ENCODE measurements at regions of chr3 and their contacts with region 1.

Region 1: GRCh38 chr3:139319428-139320402 is 24.1 kb upstream of the MRPS22 start:
- DNase-seq: no peak
- H3K4me3 ChIP-seq: no peak overlapping the region
- H3K27ac ChIP-seq: no peak overlapping the region
- H3K27me3 ChIP-seq: no peaks in the 10 kb centered on the region
- CTCF ChIP-seq: peak; percentile 74

Region 2: GRCh38 chr3:138381950-138382688 is 937.6 kb before region 1 on chr3:
- in situ Hi-C with region 1: no loop called
- DNase-seq: peak; percentile 12
- H3K4me3 ChIP-seq: no peak overlapping the region
- H3K27ac ChIP-seq: no peak overlapping the region
- H3K27me3 ChIP-seq: no peaks in the 10 kb centered on the region
- CTCF ChIP-seq: no peak

Region 3: DNA sequence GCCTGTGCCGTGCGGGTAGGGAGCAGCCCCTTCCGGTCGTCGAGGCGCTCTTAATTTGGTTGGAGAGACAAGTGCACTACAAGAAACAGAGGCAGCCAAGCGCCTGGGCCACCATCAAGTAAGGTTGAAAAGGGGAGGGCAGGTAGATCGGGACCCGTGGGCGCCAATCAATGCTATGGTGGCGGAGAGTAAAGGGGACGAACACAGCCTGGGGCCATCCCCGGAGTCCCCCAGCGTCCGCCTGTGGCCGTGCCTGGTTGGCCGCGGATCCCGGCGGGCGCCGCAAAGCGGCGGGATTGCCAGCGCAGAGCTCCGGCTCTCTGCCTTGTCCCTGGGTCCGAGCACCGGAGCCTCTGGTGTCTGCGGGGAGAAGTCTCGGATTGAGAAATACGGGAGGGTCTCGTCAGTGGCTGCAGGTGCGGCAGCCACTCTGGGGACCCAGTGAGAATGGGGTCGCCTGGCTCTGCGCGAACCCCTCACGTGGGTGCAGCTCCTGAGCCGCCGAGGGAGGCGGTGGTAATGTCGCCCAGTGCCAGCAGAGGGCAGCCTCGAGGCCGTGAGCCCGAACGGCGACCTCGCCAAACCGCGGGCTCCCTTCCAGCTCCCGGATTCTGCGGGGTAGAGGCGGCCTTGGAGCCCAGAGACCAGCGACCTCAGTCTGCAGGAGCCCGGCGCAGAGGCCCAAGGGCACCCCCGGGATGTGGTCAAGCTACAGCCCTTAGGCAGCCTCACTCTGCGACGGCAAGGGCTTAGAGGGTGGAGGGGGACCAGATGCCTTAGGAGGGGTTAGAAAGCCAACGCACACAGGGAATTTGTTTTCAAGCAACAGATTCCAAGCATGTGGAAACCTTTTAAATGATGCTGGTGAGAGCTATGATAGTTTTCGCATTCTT is 383.6 kb before region 1 on chr3:
- in situ Hi-C with region 1: loop called (anchors 25 kb)
- DNase-seq: peak; percentile 52
- H3K4me3 ChIP-seq: peak overlapping the region; percentile 46
- H3K27ac ChIP-seq: no peak overlapping the region
- H3K27me3 ChIP-seq: peaks cover 47% of the 10 kb centered on the region
- CTCF ChIP-seq: peak; percentile 92

Region 4: DNA sequence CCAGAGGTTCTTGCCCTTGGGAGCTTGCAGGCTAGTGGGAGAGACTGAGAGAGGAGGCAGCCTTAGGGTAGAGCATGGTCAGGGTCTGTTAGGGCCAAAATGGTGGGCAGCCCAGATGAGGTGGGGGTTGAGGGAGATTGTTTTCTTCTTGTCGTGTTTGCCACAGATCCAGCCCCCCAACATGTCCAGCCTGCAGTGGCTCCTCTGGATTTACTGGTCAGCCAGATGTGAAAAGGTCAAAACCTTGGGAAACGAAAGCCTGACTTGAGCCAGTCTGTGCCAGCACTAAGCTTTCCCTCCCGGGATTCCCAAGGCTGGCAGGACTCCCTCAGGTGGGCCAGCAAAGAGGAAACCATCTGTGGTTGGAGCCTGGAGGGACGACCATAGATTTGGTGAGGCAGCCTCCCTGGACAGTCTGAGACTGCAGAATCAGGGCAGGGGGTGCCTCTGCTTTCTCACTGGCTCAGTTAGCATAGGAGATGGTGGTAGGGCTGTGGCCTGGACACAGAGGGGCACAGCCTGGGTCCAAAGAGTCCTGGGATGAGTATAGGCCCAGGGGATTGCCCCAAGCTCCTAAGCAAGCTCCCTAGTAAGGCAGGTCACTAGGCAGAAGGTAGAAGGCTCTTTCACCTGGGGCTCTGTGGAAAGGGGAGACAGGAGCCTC is 223.8 kb before region 1 on chr3:
- in situ Hi-C with region 1: no loop called
- DNase-seq: no peak
- H3K4me3 ChIP-seq: no peak overlapping the region
- H3K27ac ChIP-seq: no peak overlapping the region
- H3K27me3 ChIP-seq: no peaks in the 10 kb centered on the region
- CTCF ChIP-seq: no peak

Region 5: GRCh38 chr3:139111392-139112229 is 208.1 kb before region 1 on chr3:
- in situ Hi-C with region 1: loop called (anchors 10 kb)
- DNase-seq: peak; percentile 55
- H3K4me3 ChIP-seq: no peak overlapping the region
- H3K27ac ChIP-seq: no peak overlapping the region
- H3K27me3 ChIP-seq: peaks cover 2% of the 10 kb centered on the region
- CTCF ChIP-seq: peak; percentile 92

Region 6: GRCh38 chr3:139561959-139562676 is 242.4 kb after region 1 on chr3:
- in situ Hi-C with region 1: no loop called
- DNase-seq: peak; percentile 32
- H3K4me3 ChIP-seq: no peak overlapping the region
- H3K27ac ChIP-seq: no peak overlapping the region
- H3K27me3 ChIP-seq: no peaks in the 10 kb centered on the region
- CTCF ChIP-seq: peak; percentile 87

Measured in brain microvascular endothelial cell (primary cell).